AG04449 (cell line): ENCODE measurements at regions of chr21 and their contacts with region 1.

Region 1: DNA sequence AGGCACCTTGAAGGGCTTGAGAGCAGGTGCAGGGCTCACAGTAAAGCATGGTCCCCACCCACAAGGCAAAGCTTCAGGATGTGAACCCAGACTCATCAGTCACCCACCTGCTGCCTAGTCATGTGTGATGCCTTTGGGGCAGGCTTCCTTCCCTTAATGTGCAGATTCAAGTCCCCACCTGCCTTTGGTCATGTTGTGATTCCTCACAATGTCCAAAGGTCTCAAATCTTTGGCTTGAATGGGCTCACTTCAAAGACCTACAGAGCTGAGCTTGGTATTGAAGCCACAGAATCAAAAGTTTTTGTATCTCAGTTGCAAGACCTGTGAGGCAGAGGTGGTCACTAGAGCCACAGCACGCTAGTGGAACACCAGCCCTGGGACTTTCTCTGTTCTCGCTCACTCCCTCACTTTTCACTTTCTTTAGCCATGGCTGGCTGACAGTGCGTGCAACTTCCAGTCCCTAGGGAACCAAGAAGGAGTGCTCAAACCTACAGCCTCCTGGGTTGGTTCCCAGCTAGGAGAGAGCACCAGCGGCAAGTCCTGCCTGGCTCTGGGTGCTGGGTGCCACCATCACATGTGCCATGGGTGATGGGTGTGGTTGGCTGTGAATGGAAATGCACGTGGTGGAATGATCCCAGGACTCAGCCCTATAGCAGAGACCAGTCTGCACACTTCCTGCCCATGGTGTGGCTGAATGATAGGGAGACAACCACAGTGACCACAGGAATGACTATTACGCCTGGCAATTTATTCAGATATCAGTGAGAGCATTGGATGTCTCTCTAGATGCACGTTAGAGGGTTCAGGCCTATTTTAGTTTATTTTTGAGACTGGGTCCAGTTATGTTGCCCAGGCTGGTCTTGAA is 26.4 kb upstream of the CLIC6 start:
- DNase-seq: no peak
- H3K4me3 ChIP-seq: no peak overlapping the region
- CTCF ChIP-seq: no peak

Region 2: DNA sequence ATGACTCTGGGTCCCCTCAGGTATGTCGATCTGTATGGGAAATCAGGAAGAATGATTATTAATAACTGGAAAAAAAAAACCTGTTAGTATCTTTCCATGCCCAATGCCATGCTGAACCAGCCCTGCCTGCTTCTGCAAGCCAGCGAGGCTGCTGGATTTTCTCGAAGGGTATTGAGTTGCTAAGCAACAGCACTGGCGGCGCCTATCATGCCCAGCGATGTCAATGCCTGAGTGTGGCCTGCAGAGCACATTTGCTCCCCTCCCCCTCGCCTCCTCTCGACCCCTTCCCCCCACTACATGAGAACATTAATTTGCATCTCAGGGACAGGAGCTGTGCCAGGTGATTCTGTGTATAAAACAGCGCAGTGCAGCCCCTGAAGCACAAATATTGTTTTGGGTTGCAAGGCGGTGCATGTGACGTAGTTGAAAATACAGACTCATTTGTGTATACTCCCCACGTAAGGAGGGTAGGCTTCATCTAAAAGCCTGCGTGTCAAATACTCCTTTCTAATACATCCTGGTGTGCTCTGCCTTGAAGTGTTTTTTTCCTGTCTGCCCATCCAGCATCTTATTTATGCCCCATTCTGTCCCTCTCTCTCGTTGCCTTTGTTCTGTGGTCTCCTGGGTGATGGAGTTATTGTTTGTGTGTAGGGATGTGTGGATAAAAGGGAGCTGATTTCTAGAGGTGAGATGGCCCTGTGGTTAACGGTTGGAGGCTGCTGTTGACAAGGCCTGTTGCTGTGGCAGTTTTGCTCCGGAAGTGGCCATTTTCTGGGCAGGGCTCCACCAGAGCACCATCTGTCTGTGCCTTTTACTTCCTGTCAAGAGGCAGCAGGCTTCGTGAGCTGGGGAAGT is 694.1 kb before region 1 on chr21:
- CTCF ChIA-PET with region 1: no interaction called
- POLR2A ChIA-PET with region 1: no interaction called
- DNase-seq: no peak
- H3K4me3 ChIP-seq: peak overlapping the region; percentile 29
- CTCF ChIP-seq: no peak

Region 3: GRCh38 chr21:34367321-34367935 is 275.0 kb before region 1 on chr21:
- CTCF ChIA-PET with region 1: interaction called, 10 read pairs
- POLR2A ChIA-PET with region 1: no interaction called
- DNase-seq: peak; percentile 60
- H3K4me3 ChIP-seq: no peak overlapping the region
- CTCF ChIP-seq: peak; percentile 66

Region 4: GRCh38 chr21:34669149-34669879 is 26.9 kb after region 1 on chr21:
- CTCF ChIA-PET with region 1: no interaction called
- POLR2A ChIA-PET with region 1: no interaction called
- DNase-seq: no peak
- H3K4me3 ChIP-seq: no peak overlapping the region
- CTCF ChIP-seq: no peak

Region 5: GRCh38 chr21:34908419-34909055 is 266.1 kb after region 1 on chr21:
- CTCF ChIA-PET with region 1: no interaction called
- POLR2A ChIA-PET with region 1: no interaction called
- DNase-seq: no peak
- H3K4me3 ChIP-seq: no peak overlapping the region
- CTCF ChIP-seq: no peak